SK-N-SH (cell line): ENCODE measurements at regions of chr10 and their contacts with region 1.

Region 1: GRCh38 chr10:32346134-32346550 is 816 bp downstream of the EPC1 start:
- DNase-seq: peak; percentile 97
- H3K4me3 ChIP-seq: peak overlapping the region; percentile 82 to 92
- H3K27ac ChIP-seq: peak overlapping the region; percentile 100
- H3K4me1 ChIP-seq: peaks cover 13 to 17% of the 10 kb centered on the region in 2 experiments; a peak in 3 of 4 replicates
- H3K27me3 ChIP-seq: no peaks in the 10 kb centered on the region
- CTCF ChIP-seq: peak; percentile 96
- EP300 ChIP-seq: no peak
- RAD21 ChIP-seq: peak; percentile 93

Region 2: GRCh38 chr10:32190890-32191491 is 155.2 kb before region 1 on chr10:
- CTCF ChIA-PET with region 1: interaction called, 13 read pairs
- POLR2A ChIA-PET with region 1: interaction called, 3 read pairs
- DNase-seq: no peak
- H3K4me3 ChIP-seq: no peak overlapping the region
- H3K27ac ChIP-seq: peak overlapping the region in 1 of 2 experiments; percentile 39; a peak in 1 of 4 replicates
- H3K4me1 ChIP-seq: peaks cover 0 to 9% of the 10 kb centered on the region in 2 experiments; a peak in 1 of 4 replicates
- H3K27me3 ChIP-seq: no peaks in the 10 kb centered on the region
- CTCF ChIP-seq: peak; percentile 83
- EP300 ChIP-seq: no peak
- RAD21 ChIP-seq: peak; percentile 72

Region 3: DNA sequence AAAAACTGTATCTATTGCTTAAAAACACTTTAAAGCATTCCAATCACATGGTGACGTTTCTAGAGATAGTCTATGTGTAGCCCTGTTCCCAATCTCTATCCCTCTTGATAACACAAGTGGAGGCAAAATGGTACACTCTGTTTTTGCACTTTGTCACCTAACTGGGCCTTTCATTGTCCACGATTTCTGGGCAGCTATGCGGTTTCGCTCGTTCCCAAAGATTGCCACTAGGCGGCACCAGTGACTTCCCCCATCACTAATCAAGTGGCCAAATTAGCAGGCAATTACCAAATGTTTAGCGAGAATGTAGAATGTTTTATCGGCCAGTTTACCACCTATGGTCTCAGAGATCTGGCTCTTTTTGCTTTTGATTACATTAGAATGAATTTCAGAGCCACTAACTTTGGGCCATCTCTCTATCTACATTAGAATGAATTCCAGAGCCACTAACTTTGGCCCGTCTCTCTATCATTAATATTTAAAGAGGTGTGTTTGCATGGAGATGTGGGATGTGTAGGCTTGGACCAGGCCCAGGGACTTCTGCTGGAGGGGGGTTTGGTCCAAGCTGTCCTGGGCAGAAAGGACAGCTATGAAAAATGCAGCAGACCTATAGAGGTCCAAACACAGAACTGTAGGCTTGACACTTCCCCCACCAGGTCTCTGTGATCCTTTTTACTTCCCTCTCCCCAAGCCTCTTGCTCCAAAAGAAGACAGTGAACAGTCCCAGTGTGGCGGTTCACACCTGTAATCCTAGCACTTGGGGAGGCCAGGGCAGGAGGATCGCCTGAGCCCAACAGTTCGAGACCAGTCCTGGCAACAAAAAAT is 89.3 kb before region 1 on chr10:
- CTCF ChIA-PET with region 1: interaction called, 61 read pairs
- POLR2A ChIA-PET with region 1: interaction called, 7 read pairs
- DNase-seq: peak; percentile 59
- H3K4me3 ChIP-seq: no peak overlapping the region
- H3K27ac ChIP-seq: no peak overlapping the region
- H3K4me1 ChIP-seq: peaks cover 0 to 8% of the 10 kb centered on the region in 2 experiments; a peak in 1 of 4 replicates
- H3K27me3 ChIP-seq: no peaks in the 10 kb centered on the region
- CTCF ChIP-seq: peak; percentile 86
- EP300 ChIP-seq: no peak
- RAD21 ChIP-seq: peak; percentile 79

Region 4: GRCh38 chr10:32295027-32295426 is 51.1 kb before region 1 on chr10:
- CTCF ChIA-PET with region 1: interaction called, 13 read pairs
- POLR2A ChIA-PET with region 1: no interaction called
- DNase-seq: no peak
- H3K4me3 ChIP-seq: no peak overlapping the region
- H3K27ac ChIP-seq: 0 out of 4 replicates have a peak overlapping the region, but pooled peaks of 1 of the 2 experiments have one; percentile 16
- H3K4me1 ChIP-seq: peaks cover 0 to 6% of the 10 kb centered on the region in 2 experiments; a peak in 3 of 4 replicates
- H3K27me3 ChIP-seq: no peaks in the 10 kb centered on the region
- CTCF ChIP-seq: no peak
- EP300 ChIP-seq: no peak
- RAD21 ChIP-seq: no peak

Region 5: GRCh38 chr10:32323051-32323450 is 23.1 kb before region 1 on chr10:
- CTCF ChIA-PET with region 1: interaction called, 16 read pairs
- POLR2A ChIA-PET with region 1: no interaction called
- DNase-seq: no peak
- H3K4me3 ChIP-seq: no peak overlapping the region
- H3K27ac ChIP-seq: no peak overlapping the region
- H3K4me1 ChIP-seq: peaks cover 0 to 10% of the 10 kb centered on the region in 2 experiments; a peak in 3 of 4 replicates
- H3K27me3 ChIP-seq: no peaks in the 10 kb centered on the region
- CTCF ChIP-seq: no peak
- EP300 ChIP-seq: no peak
- RAD21 ChIP-seq: no peak

Region 6: GRCh38 chr10:32328499-32328898 is 17.6 kb before region 1 on chr10:
- CTCF ChIA-PET with region 1: interaction called, 39 read pairs
- POLR2A ChIA-PET with region 1: interaction called, 3 read pairs
- DNase-seq: no peak
- H3K4me3 ChIP-seq: no peak overlapping the region
- H3K27ac ChIP-seq: no peak overlapping the region
- H3K4me1 ChIP-seq: peaks cover 5 to 19% of the 10 kb centered on the region in 2 experiments; a peak in 3 of 4 replicates
- H3K27me3 ChIP-seq: no peaks in the 10 kb centered on the region
- CTCF ChIP-seq: no peak
- EP300 ChIP-seq: no peak
- RAD21 ChIP-seq: no peak

Region 7: GRCh38 chr10:32367793-32368453 is 21.8 kb after region 1 on chr10:
- CTCF ChIA-PET with region 1: interaction called, 15 read pairs
- POLR2A ChIA-PET with region 1: interaction called, 3 read pairs
- DNase-seq: peak; percentile 46
- H3K4me3 ChIP-seq: no peak overlapping the region; a peak in 1 of 4 replicates
- H3K27ac ChIP-seq: no peak overlapping the region
- H3K4me1 ChIP-seq: no peaks in the 10 kb centered on the region; a peak in 1 of 4 replicates
- H3K27me3 ChIP-seq: no peaks in the 10 kb centered on the region
- CTCF ChIP-seq: peak; percentile 87
- EP300 ChIP-seq: no peak
- RAD21 ChIP-seq: peak; percentile 82

Region 8: DNA sequence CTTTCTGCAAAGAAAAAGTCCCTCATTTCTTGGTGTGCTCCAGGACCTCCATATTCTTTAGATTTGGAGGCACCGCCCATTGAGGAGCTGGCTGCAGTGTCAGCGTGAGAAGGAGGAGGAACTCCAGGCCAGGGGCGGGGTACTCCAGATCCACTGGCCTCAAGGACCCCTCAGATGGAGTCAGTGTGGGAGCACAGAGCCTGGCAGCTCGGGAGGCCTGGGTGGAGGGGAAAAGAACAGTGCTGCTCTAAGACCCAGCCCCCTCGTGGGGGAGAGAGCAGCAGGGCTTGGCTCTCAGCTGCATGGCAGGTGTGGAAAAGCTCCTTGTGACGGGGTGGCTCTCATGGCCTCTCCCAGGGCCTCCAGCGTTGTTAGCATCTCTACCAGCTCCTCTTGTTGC is 541.3 kb after region 1 on chr10:
- CTCF ChIA-PET with region 1: no interaction called
- POLR2A ChIA-PET with region 1: no interaction called
- DNase-seq: no peak
- H3K4me3 ChIP-seq: no peak overlapping the region
- H3K27ac ChIP-seq: no peak overlapping the region
- H3K4me1 ChIP-seq: no peaks in the 10 kb centered on the region
- H3K27me3 ChIP-seq: no peaks in the 10 kb centered on the region
- CTCF ChIP-seq: no peak
- EP300 ChIP-seq: no peak
- RAD21 ChIP-seq: no peak